ENCODE measurements at regions of chr4 and their contacts with region 1.

Region 1: DNA sequence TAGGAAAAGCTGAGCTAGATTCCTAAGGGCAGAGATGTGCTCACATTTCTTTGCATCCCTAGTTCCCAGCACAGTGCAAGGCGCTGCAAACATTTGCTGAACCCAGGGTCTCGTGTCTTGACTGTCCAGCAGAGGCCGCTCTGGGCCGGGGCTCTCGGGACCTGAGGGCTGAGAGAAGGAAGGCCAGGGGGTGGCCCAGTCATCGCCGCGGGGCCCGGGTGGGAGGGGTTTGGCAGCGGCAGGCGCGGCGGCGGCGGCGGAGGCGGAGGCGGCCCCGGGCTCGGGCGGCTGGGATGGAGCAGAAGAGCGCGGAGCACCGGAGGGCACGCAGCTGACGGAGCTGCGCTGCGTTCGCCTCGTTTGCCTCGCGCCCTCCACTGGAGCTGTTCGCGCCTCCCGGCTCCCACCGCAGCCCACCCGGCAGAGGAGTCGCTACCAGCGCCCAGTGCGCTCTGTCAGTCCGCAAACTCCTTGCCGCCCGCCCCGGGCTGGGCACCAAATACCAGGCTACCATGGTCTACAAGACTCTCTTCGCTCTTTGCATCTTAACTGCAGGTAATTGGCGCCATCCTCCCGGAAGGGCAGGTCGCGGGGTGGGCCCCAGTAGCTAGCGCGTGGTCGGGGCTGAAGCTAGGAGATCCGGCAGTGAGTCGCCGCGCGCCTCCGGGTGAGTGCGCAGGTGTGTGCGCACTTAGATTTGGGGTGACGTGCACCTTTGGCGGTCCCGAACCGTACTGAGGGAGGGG is at the start of gene PARM1:
- DNase-seq: peak; percentile 77
- ATAC-seq: peak; percentile 89
- H3K4me3 Mint-ChIP-seq: peak within 1 kb of the TSS; percentile 91
- H3K27ac Mint-ChIP-seq: peak within 1 kb of the TSS; percentile 82
- H3K4me1 Mint-ChIP-seq: peaks cover 40% of the 10 kb centered on the region
- H3K27me3 Mint-ChIP-seq: peaks cover 7% of the 10 kb centered on the region
- CTCF ChIP-seq: no peak
- total RNA-seq, gene PARM1: 6.5 and 6.7 TPM in 2 replicates

Region 2: DNA sequence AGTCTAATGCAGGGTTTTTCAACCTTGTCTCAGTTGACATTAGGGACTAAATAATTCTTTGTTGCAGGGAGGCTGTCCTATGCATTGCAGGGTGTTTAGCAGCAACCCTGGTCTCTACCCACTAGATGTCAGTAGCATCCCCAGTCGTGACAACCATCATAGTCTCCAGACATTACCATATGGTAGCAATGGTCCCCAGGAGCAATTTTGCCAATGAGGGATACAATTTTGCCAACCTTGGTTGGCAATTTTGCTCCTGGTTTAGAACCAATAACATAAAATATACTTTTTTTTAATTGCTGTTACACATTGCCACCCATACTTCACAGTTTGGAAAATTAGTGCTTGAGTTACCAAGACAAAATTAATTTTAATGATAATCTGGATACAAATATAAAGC is 562.1 kb before region 1 on chr4:
- CTCF ChIA-PET with region 1: no interaction called
- POLR2A ChIA-PET with region 1: no interaction called
- intact Hi-C with region 1: loop called (anchors 10 kb)
- DNase-seq: no peak
- ATAC-seq: peak; percentile 71
- H3K4me3 Mint-ChIP-seq: no peak overlapping the region
- H3K27ac Mint-ChIP-seq: no peak overlapping the region
- H3K4me1 Mint-ChIP-seq: no peaks in the 10 kb centered on the region
- H3K27me3 Mint-ChIP-seq: peaks cover 15% of the 10 kb centered on the region
- CTCF ChIP-seq: no peak

Region 3: DNA sequence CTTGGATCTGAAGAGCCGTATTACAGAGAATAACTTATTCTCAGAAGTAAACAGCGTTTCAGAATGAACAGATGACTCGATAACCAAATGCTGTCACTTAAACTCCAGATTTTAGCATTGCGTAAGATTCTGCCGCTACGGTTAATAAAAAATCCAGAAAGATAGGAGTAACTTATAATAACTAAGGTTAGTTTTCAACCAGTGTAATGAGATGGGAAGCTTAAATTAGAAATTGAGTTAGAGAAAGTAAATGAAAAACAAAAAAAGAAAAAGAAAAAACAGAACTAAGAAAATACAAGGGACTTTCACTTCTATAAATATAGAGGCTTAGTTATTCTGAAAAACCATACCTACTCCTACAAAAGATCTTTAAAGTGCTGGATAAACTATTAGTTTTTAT is 13.2 kb before region 1 on chr4:
- CTCF ChIA-PET with region 1: interaction called, 8 read pairs
- POLR2A ChIA-PET with region 1: interaction called, 4 read pairs
- intact Hi-C with region 1: loop called (anchors 1 kb)
- DNase-seq: no peak
- ATAC-seq: no peak
- H3K4me3 Mint-ChIP-seq: peak overlapping the region; percentile 76
- H3K27ac Mint-ChIP-seq: peak overlapping the region; percentile 7
- H3K4me1 Mint-ChIP-seq: peaks cover 20% of the 10 kb centered on the region
- H3K27me3 Mint-ChIP-seq: peaks cover 2% of the 10 kb centered on the region
- CTCF ChIP-seq: no peak

Region 4: GRCh38 chr4:75118739-75119138 is 185.8 kb after region 1 on chr4:
- CTCF ChIA-PET with region 1: interaction called, 14 read pairs
- POLR2A ChIA-PET with region 1: no interaction called
- intact Hi-C with region 1: loop called (anchors 1 kb)
- DNase-seq: no peak
- ATAC-seq: no peak
- H3K4me3 Mint-ChIP-seq: no peak overlapping the region
- H3K27ac Mint-ChIP-seq: no peak overlapping the region
- H3K4me1 Mint-ChIP-seq: peaks cover 5% of the 10 kb centered on the region
- H3K27me3 Mint-ChIP-seq: peaks cover 2% of the 10 kb centered on the region
- CTCF ChIP-seq: no peak

Region 5: GRCh38 chr4:75289914-75290582 is 357.1 kb after region 1 on chr4:
- CTCF ChIA-PET with region 1: interaction called, 17 read pairs
- POLR2A ChIA-PET with region 1: no interaction called
- intact Hi-C with region 1: loop called (anchors 1 kb)
- DNase-seq: no peak
- ATAC-seq: peak; percentile 49
- H3K4me3 Mint-ChIP-seq: no peak overlapping the region
- H3K27ac Mint-ChIP-seq: no peak overlapping the region
- H3K4me1 Mint-ChIP-seq: peaks cover 8% of the 10 kb centered on the region
- H3K27me3 Mint-ChIP-seq: no peaks in the 10 kb centered on the region
- CTCF ChIP-seq: peak; percentile 25

Region 6: GRCh38 chr4:75490155-75490554 is 557.2 kb after region 1 on chr4:
- CTCF ChIA-PET with region 1: interaction called, 7 read pairs
- POLR2A ChIA-PET with region 1: no interaction called
- intact Hi-C with region 1: loop called (anchors 1 kb)
- DNase-seq: no peak
- ATAC-seq: no peak
- H3K4me3 Mint-ChIP-seq: no peak overlapping the region
- H3K27ac Mint-ChIP-seq: no peak overlapping the region
- H3K4me1 Mint-ChIP-seq: no peaks in the 10 kb centered on the region
- H3K27me3 Mint-ChIP-seq: no peaks in the 10 kb centered on the region
- CTCF ChIP-seq: no peak

Region 7: DNA sequence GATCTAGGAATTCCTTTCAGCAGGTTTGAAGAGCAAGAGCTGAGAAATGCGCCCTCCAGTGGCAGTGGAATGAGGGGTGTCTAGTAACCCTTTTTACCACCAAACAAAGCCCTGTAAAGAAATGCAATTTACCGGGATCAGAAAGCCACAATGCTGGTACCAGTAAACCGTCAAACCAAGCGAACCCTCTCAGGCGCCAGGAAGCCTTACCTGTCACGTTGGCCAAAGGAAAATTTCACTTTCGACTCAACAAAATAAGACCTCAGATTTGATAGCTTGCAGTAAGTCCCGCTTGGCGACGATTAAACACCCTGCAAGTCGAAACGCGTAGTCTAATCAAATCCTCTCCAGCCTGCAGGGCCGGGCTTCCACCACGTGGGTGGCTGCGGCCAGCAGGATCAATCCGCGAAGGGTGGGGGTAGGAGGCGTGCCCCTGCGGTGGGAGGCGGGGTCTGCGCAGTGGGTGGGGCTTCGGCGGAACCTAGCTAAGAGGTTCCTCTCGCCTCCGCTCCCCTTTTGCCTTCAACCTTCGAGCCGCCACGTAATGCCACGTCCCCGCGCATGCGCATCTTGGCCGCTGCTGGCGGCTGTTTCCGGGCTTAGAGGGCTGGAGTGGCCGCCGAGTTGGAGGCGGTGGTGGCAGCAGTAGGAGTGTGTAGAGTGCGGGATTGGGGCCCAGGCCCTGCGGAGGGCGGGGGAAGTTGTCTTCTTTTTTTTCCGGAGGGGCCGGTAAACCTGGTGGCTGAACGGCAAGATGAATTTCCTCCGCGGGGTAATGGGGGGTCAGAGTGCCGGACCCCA is 791.3 kb after region 1 on chr4 and contains the start of gene USO1:
- CTCF ChIA-PET with region 1: no interaction called
- POLR2A ChIA-PET with region 1: no interaction called
- intact Hi-C with region 1: loop called (anchors 5 kb)
- DNase-seq: peak; percentile 99
- ATAC-seq: peak; percentile 95
- H3K4me3 Mint-ChIP-seq: peak within 1 kb of the TSS; percentile 100
- H3K27ac Mint-ChIP-seq: peak within 1 kb of the TSS; percentile 99
- H3K4me1 Mint-ChIP-seq: peaks cover 52% of the 10 kb centered on the region
- H3K27me3 Mint-ChIP-seq: no peaks in the 10 kb centered on the region
- CTCF ChIP-seq: peak; percentile 23
- total RNA-seq, gene USO1: 41.3 and 41.7 TPM in 2 replicates